ENCODE measurements at regions of chr9 and their contacts with region 1.

Region 1: DNA sequence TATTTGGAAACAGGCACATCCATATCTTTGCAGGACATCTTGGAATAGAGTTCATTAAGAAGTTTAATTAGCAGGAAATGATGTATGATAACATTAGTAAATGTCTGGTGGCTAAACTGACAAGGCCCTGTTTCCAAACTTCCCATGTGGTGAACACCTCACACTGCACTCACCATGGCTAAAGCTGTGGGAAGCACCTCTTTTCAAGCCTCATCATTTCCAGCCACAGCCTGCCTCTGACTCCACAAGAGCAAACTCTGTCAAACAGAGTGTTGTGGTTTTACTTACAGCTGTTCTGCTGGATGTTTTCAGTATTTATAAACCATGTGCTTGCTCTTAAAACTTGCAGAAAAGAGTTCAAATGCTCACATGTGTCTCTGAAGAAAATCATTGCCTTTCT is 14.9 kb upstream of the NDUFB6 start:
- DNase-seq: no peak
- H3K4me3 ChIP-seq: no peak overlapping the region
- H3K27ac ChIP-seq: no peak overlapping the region
- H3K4me1 ChIP-seq: peaks cover 0 to 7% (median 0%) of the 10 kb centered on the region in 6 donors
- H3K27me3 ChIP-seq: peaks cover 0 to 6% (median 0%) of the 10 kb centered on the region in 7 donors
- CTCF ChIP-seq: no peak
- POLR2A ChIP-seq: no peak

Region 2: GRCh38 chr9:32965999-32966722 is 378.3 kb after region 1 on chr9:
- intact Hi-C with region 1: loop called (anchors 2 kb)
- DNase-seq: no peak
- H3K4me3 ChIP-seq: no peak overlapping the region
- H3K27ac ChIP-seq: no peak overlapping the region
- H3K4me1 ChIP-seq: no peaks in the 10 kb centered on the region
- H3K27me3 ChIP-seq: no peaks in the 10 kb centered on the region
- CTCF ChIP-seq: no peak
- POLR2A ChIP-seq: no peak